H1 (cell line): ENCODE measurements at regions of chr17 and their contacts with region 1.

Region 1: GRCh38 chr17:40536295-40537171 is 28.7 kb downstream of the CCR7 start:
- DNase-seq: no peak
- H3K4me3 ChIP-seq: no peak overlapping the region
- H3K27ac ChIP-seq: no peak overlapping the region
- H3K4me1 ChIP-seq: peaks cover 0 to 8% (median 1%) of the 10 kb centered on the region in 4 experiments; a peak in 2 of 7 replicates
- H3K27me3 ChIP-seq: no peaks in the 10 kb centered on the region; a peak in 1 of 7 replicates
- CTCF ChIP-seq: no peak
- EP300 ChIP-seq: no peak
- POLR2A ChIP-seq: no peak
- RAD21 ChIP-seq: no peak

Region 2: GRCh38 chr17:40490289-40490853 is 46.2 kb before region 1 on chr17:
- CTCF ChIA-PET with region 1: interaction called, 12 read pairs
- POLR2A ChIA-PET with region 1: no interaction called
- DNase-seq: peak in 1 of 2 experiments; percentile 69
- H3K4me3 ChIP-seq: peak overlapping the region in 1 of 4 experiments; percentile 8; a peak in 1 of 8 replicates
- H3K27ac ChIP-seq: peak overlapping the region; percentile 41; the same call in 1 of the 2 replicates
- H3K4me1 ChIP-seq: peaks cover 9 to 26% (median 24%) of the 10 kb centered on the region in 4 experiments
- H3K27me3 ChIP-seq: no peaks in the 10 kb centered on the region; a peak in 1 of 7 replicates
- CTCF ChIP-seq: no peak
- EP300 ChIP-seq: no peak
- POLR2A ChIP-seq: peak in 1 of 2 experiments; percentile 41; a peak in 1 of 3 replicates
- RAD21 ChIP-seq: no peak

Region 3: DNA sequence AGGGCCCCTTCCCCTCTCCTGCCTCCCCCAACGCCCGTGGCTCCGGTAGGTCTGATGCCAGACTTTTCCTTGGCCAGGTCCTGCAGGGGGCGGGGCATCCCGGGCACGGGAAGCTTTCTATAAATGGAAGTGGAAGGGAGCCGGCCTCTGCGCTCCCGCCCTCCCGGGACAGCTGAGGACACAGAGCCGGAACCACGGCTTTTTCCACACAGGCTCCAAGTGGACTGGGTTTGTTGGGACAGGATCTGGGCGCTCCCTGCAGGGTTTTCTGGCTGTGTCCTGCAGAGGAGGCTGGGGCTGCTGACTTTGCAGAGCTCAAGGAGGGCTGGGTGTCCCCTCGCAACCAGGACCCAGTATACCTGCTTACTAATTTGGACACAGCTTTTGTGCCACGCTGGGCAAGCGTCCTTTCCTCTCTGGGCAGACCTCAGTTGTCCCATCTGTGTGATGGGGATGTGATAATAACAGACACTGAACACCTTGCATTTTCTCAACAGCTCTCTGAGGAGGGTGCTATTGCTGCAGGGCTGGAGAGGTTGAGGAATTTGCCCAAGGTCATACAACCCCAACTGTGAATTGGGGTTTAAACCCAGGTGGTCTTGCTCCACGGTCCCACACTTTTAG is 36.9 kb before region 1 on chr17:
- CTCF ChIA-PET with region 1: interaction called, 25 read pairs
- POLR2A ChIA-PET with region 1: no interaction called
- DNase-seq: peak in 1 of 2 experiments; percentile 89
- H3K4me3 ChIP-seq: peak overlapping the region in 1 of 4 experiments; percentile 10; a peak in 2 of 8 replicates
- H3K27ac ChIP-seq: no peak overlapping the region
- H3K4me1 ChIP-seq: peaks cover 5 to 18% (median 7%) of the 10 kb centered on the region in 4 experiments; a peak in 6 of 7 replicates
- H3K27me3 ChIP-seq: no peaks in the 10 kb centered on the region
- CTCF ChIP-seq: peak in 1 of 3 experiments; percentile 21; a peak in 2 of 4 replicates
- EP300 ChIP-seq: no peak
- POLR2A ChIP-seq: no peak
- RAD21 ChIP-seq: no peak

Region 4: GRCh38 chr17:40551879-40552768 is 15.6 kb after region 1 on chr17:
- CTCF ChIA-PET with region 1: interaction called, 80 read pairs
- POLR2A ChIA-PET with region 1: interaction called, 3 read pairs
- DNase-seq: no peak
- H3K4me3 ChIP-seq: no peak overlapping the region
- H3K27ac ChIP-seq: no peak overlapping the region
- H3K4me1 ChIP-seq: peaks cover 0 to 7% (median 2%) of the 10 kb centered on the region in 4 experiments; a peak in 2 of 7 replicates
- H3K27me3 ChIP-seq: no peaks in the 10 kb centered on the region; a peak in 1 of 7 replicates
- CTCF ChIP-seq: no peak
- EP300 ChIP-seq: no peak
- POLR2A ChIP-seq: no peak
- RAD21 ChIP-seq: no peak